ENCODE measurements at regions of chr14 and their contacts with region 1.

Region 1: DNA sequence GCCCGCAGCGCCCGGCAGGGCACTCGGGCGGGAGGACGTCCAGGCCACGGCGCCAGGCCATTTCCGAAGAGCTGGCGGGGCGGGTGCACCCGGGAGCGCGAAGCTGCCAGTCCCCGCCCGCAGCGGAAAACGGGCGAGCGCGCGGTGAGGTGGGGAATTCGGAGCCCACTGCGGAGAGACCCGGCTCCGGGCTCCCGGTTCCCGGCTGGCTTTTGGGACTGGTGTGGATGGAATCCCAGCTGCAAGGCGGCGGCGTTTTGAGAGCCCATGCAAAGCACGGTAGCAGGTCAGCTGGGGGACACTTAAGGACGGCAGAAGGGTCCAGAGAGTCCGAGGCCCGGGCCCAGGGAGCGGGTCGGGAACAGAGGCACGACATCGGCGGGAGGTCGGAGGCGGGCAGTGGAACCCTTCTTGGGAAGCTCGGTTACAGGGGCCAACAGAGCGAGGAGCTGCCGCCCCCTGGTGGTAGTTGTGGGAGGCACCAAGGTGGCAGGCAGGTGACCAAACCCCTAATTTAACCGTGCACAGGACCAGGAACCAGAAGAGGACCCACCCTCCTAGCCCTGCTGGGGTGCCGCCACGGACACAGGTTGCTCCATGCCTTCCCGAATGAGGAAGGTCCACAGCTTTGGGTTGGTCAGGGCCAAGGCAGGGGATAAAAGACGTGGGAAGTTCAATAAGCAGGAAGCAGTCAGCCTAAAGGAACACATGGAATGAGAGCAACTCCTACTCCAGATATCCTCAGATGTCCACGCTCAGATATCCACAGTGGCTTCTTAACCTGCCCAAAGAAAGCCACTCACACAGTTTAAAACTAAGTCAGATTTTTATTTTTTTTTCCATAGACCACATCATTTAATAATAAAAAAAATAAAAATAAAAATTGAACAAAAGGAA is 685 bp upstream of the CDH24 start:
- DNase-seq: peak; percentile 92
- H3K4me3 Mint-ChIP-seq: peak overlapping the region; percentile 78
- H3K27ac Mint-ChIP-seq: no peak overlapping the region
- H3K4me1 Mint-ChIP-seq: peaks cover 16% of the 10 kb centered on the region
- H3K27me3 Mint-ChIP-seq: peaks cover 2% of the 10 kb centered on the region

Region 2: DNA sequence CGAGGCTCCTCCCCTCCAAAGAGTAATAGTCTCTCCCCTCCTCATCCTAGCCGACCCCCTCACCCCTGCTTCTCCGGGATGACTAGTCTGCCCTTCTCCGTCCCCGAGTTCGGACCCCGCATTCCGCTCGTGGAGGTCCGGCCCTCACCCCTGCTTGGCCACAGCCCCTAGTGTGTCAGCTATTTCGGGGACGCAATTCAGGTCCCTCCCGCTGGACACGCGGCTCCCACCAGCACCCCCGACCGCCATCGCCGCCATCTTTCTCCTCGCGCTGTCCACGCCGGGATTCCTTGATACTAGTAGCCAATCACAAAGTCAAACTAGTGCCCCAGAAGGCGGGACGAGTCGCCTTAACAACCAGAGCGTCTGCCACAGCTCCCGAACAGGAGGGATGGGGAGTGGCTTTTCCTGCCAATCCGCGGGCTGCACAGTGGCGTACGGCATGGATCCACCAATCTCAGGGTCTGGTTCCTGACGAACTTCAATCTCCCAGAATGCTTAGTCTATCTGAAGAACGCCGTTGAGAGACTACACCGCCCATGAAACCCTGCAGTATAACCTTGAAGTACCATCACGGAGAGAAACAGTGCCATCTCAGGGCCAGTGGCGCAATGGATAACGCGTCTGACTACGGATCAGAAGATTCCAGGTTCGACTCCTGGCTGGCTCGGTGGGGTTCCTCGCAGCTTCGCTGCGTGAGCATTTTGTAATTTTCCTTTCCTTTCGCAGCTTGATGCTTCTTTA is 128.7 kb before region 1 on chr14 and contains the start of gene PRMT5:
- CTCF ChIA-PET with region 1: interaction called, 16 read pairs
- POLR2A ChIA-PET with region 1: no interaction called
- intact Hi-C with region 1: loop called (anchors 1 kb)
- DNase-seq: peak; percentile 98
- H3K4me3 Mint-ChIP-seq: no peak within 1 kb of the TSS
- H3K27ac Mint-ChIP-seq: no peak within 1 kb of the TSS
- H3K4me1 Mint-ChIP-seq: peaks cover 37% of the 10 kb centered on the region
- H3K27me3 Mint-ChIP-seq: no peaks in the 10 kb centered on the region
- total RNA-seq, gene PRMT5: 85.6 to 100 TPM

Region 3: DNA sequence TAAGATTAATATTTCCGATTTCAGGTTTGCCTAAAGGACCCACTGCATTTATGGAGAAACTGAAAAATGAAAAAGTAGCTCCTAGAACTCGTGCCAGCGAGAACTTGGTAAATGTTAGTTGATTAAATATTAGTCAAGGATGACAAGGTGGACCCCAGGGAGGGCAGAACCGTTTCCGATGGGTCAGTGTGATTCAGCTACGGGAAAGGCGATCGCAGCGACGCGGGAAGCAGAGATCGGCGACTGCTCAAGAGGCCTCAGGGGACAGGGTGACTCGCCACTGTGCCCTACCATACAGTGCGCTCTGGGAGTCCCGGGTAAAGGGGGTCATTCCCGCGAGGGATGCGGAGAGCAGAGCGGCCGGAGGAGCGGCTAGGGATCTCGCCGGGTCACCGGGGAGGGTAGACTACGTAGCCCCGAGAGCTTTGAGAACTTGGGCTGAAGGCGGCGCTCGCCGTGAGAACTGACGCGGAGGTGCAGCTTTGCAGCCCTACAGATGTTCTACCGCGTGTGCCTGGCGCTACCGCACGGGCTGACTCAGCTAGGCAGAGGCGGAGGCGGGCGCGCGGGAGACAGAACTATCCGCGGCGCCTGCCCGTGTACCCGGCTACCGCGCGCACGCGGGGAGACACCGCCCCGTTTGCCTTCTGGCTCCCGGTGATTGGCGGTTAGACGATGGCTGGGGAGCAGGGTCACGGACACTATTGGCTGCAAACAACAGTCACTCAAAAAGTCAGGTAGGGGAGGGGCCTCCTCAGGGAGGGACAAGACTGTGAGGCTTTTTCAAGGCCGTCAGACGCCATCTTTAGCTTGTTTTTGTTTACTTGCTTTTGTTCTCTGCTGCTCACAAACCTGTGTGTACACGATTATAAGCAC is 51.2 kb before region 1 on chr14:
- CTCF ChIA-PET with region 1: interaction called, 68 read pairs
- POLR2A ChIA-PET with region 1: interaction called, 5 read pairs
- intact Hi-C with region 1: loop called (anchors 1 kb)
- DNase-seq: peak; percentile 99
- H3K4me3 Mint-ChIP-seq: peak overlapping the region; percentile 94
- H3K27ac Mint-ChIP-seq: peak overlapping the region; percentile 96
- H3K4me1 Mint-ChIP-seq: peaks cover 33% of the 10 kb centered on the region
- H3K27me3 Mint-ChIP-seq: no peaks in the 10 kb centered on the region

Region 4: DNA sequence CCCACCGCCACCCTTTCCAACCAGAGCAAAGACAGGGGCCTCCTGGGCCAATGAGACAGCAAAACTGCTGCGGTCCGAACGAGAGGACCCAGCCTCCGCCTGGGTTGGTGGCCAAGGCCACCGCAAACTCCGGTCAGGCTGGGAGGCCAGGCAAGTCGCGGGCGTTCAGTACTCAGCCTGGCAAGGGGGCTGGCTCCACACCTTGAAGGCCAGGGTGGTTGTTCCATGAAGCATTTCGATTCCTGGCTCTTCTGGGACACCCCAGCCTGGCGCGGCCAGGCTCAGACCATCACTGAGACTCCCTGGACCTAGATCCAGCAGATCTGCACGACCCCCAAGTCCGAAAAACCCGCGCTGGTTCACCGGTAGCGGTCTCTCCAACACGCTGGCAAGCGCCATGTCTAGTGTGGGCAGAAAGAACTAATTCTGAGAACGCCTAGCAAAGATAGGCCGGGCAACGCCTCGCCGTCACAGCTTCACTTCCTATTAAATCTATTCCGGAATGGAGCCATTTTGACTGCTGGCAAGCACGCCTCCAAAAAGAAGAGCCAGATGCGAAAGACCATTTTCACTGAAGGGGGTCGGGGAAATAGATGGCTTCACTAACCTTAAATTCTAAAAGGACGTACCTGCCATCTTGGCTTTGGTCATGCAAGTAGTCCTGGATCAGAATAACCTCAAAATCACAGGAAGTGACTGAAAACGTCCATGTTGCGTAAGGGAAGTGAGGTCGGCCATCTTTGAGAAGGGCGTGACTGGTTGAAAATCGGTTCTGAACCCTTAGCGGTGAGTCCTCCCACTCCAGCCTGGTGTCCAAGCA is 23.3 kb before region 1 on chr14 and contains the start of gene PSMB5:
- CTCF ChIA-PET with region 1: interaction called, 11 read pairs
- POLR2A ChIA-PET with region 1: no interaction called
- intact Hi-C with region 1: loop called (anchors 1 kb)
- DNase-seq: peak; percentile 94
- H3K4me3 Mint-ChIP-seq: peak within 1 kb of the TSS; percentile 95
- H3K27ac Mint-ChIP-seq: peak within 1 kb of the TSS; percentile 95
- H3K4me1 Mint-ChIP-seq: peaks cover 28% of the 10 kb centered on the region
- H3K27me3 Mint-ChIP-seq: no peaks in the 10 kb centered on the region
- total RNA-seq, gene PSMB5: 116 to 119 TPM

Region 5: GRCh38 chr14:23095196-23096108 is 37.4 kb after region 1 on chr14 and contains the start of gene C14orf119:
- CTCF ChIA-PET with region 1: interaction called, 14 read pairs
- POLR2A ChIA-PET with region 1: no interaction called
- intact Hi-C with region 1: no loop called
- DNase-seq: peak; percentile 100
- H3K4me3 Mint-ChIP-seq: no peak within 1 kb of the TSS
- H3K27ac Mint-ChIP-seq: no peak within 1 kb of the TSS
- H3K4me1 Mint-ChIP-seq: peaks cover 40% of the 10 kb centered on the region
- H3K27me3 Mint-ChIP-seq: no peaks in the 10 kb centered on the region
- total RNA-seq, gene C14orf119: 58.0 to 62.8 TPM

Region 6: GRCh38 chr14:23555882-23556699 is 498.1 kb after region 1 on chr14 and contains the start of gene THTPA:
- CTCF ChIA-PET with region 1: no interaction called
- POLR2A ChIA-PET with region 1: no interaction called
- intact Hi-C with region 1: no loop called
- DNase-seq: peak; percentile 95
- H3K4me3 Mint-ChIP-seq: peak within 1 kb of the TSS; percentile 90
- H3K27ac Mint-ChIP-seq: peak within 1 kb of the TSS; percentile 93
- H3K4me1 Mint-ChIP-seq: peaks cover 40% of the 10 kb centered on the region
- H3K27me3 Mint-ChIP-seq: no peaks in the 10 kb centered on the region
- total RNA-seq, gene THTPA: 7.7 to 8.2 TPM